Mammary epithelial cell (primary cell): ENCODE measurements at regions of chr17 and their contacts with region 1.

Region 1: DNA sequence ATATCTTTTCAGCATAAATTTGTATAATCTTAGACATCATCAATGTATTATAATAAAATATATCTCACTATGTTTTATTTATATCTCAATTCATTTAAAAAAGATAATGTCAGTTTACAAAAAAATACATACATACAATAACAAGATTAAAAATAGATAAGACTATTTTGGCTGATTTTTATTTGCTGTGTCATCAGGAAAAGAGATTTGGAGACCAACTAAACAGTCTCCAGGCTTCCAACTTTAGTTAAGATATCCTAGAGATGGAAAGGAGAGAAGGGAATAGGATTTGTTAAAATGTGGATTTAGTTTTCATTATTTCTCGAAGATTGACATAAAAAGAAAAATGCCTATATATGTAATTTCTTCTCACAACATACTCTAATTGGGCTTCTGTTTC is 433.8 kb upstream of the TOM1L1 start:
- DNase-seq: no peak
- H3K4me3 ChIP-seq: no peak overlapping the region
- H3K27ac ChIP-seq: no peak overlapping the region
- H3K4me1 ChIP-seq: no peaks in the 10 kb centered on the region
- H3K27me3 ChIP-seq: no peaks in the 10 kb centered on the region
- CTCF ChIP-seq: no peak

Region 2: GRCh38 chr17:54736573-54736972 is 269.7 kb after region 1 on chr17:
- CTCF ChIA-PET with region 1: no interaction called
- dilution Hi-C with region 1: no loop called
- in situ Hi-C with region 1: no loop called
- intact Hi-C with region 1: loop called (anchors 5 kb)
- DNase-seq: no peak
- H3K4me3 ChIP-seq: no peak overlapping the region
- H3K27ac ChIP-seq: no peak overlapping the region
- H3K4me1 ChIP-seq: no peaks in the 10 kb centered on the region
- H3K27me3 ChIP-seq: no peaks in the 10 kb centered on the region
- CTCF ChIP-seq: no peak